GM12878 (cell line): ENCODE measurements at regions of chr3 and their contacts with region 1.

Region 1: GRCh38 chr3:141441381-141442364 is 45.2 kb upstream of the RASA2 start:
- DNase-seq: peak; percentile 84
- ATAC-seq: peak; percentile 99
- H3K4me3 ChIP-seq: no peak overlapping the region
- H3K27ac ChIP-seq: peak overlapping the region; percentile 73
- H3K4me1 ChIP-seq: peaks cover 31% of the 10 kb centered on the region
- H3K27me3 ChIP-seq: no peaks in the 10 kb centered on the region
- CTCF ChIP-seq: peak; percentile 94 to 96 (median 95)
- EP300 ChIP-seq: no peak
- POLR2A ChIP-seq: no peak
- RAD21 ChIP-seq: peak; percentile 86

Region 2: DNA sequence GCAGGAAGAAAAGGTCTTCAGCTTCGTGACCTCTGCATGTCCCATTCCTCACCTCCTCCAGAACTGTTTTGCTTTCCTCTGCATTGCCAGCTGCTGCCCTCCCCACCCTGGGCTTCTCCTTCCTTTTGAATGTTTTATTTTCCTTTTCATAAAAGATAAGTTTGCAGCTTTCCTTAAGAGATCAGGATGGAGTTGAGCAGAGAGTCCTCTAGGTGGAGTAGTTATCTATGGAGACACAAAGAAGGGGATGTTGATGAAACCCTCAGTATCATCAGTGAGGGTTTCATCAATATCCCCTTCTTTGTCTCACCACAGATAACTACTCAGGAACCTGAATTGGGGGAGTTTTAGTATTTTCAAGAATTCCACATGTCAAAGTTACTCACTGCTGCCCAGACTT is 519.0 kb before region 1 on chr3:
- CTCF ChIA-PET with region 1: no interaction called
- POLR2A ChIA-PET with region 1: no interaction called
- RAD21 ChIA-PET with region 1: no interaction called
- SMC1A ChIA-PET with region 1: no interaction called
- in situ Hi-C with region 1: no loop called
- intact Hi-C with region 1: no loop called
- DNase-seq: no peak
- ATAC-seq: peak; percentile 77
- H3K4me3 ChIP-seq: no peak overlapping the region
- H3K27ac ChIP-seq: no peak overlapping the region
- H3K4me1 ChIP-seq: no peaks in the 10 kb centered on the region
- H3K27me3 ChIP-seq: no peaks in the 10 kb centered on the region
- CTCF ChIP-seq: peak; percentile 39 to 45 (median 42); a peak in 5 of 6 replicates
- EP300 ChIP-seq: no peak
- POLR2A ChIP-seq: no peak
- RAD21 ChIP-seq: peak; percentile 57

Region 3: GRCh38 chr3:141303481-141304223 is 138.0 kb before region 1 on chr3:
- CTCF ChIA-PET with region 1: interaction called, 31 read pairs
- POLR2A ChIA-PET with region 1: no interaction called
- RAD21 ChIA-PET with region 1: interaction called, 12 read pairs
- SMC1A ChIA-PET with region 1: interaction called, 209 read pairs
- in situ Hi-C with region 1: no loop called
- intact Hi-C with region 1: no loop called
- DNase-seq: peak; percentile 64
- ATAC-seq: peak; percentile 93
- H3K4me3 ChIP-seq: no peak overlapping the region
- H3K27ac ChIP-seq: no peak overlapping the region
- H3K4me1 ChIP-seq: peaks cover 8% of the 10 kb centered on the region
- H3K27me3 ChIP-seq: no peaks in the 10 kb centered on the region
- CTCF ChIP-seq: peak; percentile 55 to 78 (median 70); a peak in 5 of 6 replicates
- EP300 ChIP-seq: no peak
- POLR2A ChIP-seq: no peak
- RAD21 ChIP-seq: peak; percentile 89

Region 4: DNA sequence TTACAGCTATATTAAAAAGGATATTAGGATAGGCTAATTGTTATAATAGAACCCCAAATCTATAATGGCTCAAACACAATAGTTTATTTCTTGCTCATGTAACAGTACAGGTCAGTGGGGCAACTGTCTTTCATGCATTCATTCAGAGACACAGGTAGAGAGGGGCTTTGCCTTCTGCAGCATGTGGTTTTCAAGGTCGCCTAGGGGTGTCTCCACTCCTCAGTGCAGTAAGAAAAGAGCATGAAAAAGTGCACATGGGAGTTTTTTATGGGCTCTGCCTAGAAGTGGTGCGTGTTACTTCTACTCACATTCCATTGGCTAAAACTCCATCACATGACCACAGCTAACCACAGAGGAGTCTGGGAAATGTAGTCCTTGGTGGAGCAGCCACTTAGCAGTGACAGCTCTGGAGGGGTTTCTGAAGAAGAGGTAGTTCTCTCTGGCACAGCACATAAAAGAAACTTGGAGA is 71.6 kb before region 1 on chr3:
- CTCF ChIA-PET with region 1: interaction called, 44 read pairs
- POLR2A ChIA-PET with region 1: interaction called, 13 read pairs
- RAD21 ChIA-PET with region 1: interaction called, 60 read pairs
- SMC1A ChIA-PET with region 1: interaction called, 81 read pairs
- in situ Hi-C with region 1: loop called (anchors 5 kb)
- intact Hi-C with region 1: no loop called
- DNase-seq: peak; percentile 96
- ATAC-seq: peak; percentile 87
- H3K4me3 ChIP-seq: no peak overlapping the region
- H3K27ac ChIP-seq: peak overlapping the region; percentile 35
- H3K4me1 ChIP-seq: peaks cover 53% of the 10 kb centered on the region
- H3K27me3 ChIP-seq: no peaks in the 10 kb centered on the region
- CTCF ChIP-seq: peak; percentile 52 to 75 (median 69)
- EP300 ChIP-seq: no peak
- POLR2A ChIP-seq: peak; percentile 53
- RAD21 ChIP-seq: peak; percentile 80

Region 5: DNA sequence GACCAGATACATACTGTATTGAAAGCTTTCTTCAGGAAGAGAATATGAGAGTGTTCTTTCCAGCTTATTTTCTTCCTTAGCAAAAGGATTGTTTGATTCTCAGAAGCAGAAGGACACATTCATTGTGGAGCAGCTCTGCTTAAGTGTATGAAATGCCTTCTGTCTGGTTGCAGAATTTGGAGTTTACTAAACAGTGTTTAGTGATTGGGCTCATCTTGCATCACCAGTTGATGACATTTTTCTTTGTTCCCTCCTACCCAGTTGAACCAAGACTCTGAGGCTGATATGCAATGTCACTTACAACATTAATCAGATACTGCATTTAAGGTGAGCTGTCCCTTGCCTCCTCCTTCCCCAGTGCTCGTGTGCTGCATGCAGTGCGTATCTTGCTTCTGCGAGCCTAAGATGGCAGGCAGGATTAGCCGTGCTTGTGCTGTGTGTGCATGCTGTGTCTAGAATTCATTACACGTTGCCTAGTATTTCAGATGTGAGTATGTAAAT is 55.0 kb before region 1 on chr3:
- CTCF ChIA-PET with region 1: interaction called, 40 read pairs
- POLR2A ChIA-PET with region 1: interaction called, 4 read pairs
- RAD21 ChIA-PET with region 1: interaction called, 40 read pairs
- SMC1A ChIA-PET with region 1: interaction called, 84 read pairs
- in situ Hi-C with region 1: no loop called
- intact Hi-C with region 1: no loop called
- DNase-seq: no peak
- ATAC-seq: peak; percentile 58
- H3K4me3 ChIP-seq: peak overlapping the region; percentile 67
- H3K27ac ChIP-seq: peak overlapping the region; percentile 94
- H3K4me1 ChIP-seq: peaks cover 30% of the 10 kb centered on the region
- H3K27me3 ChIP-seq: no peaks in the 10 kb centered on the region
- CTCF ChIP-seq: no peak
- EP300 ChIP-seq: no peak
- POLR2A ChIP-seq: peak; percentile 93
- RAD21 ChIP-seq: no peak

Region 6: DNA sequence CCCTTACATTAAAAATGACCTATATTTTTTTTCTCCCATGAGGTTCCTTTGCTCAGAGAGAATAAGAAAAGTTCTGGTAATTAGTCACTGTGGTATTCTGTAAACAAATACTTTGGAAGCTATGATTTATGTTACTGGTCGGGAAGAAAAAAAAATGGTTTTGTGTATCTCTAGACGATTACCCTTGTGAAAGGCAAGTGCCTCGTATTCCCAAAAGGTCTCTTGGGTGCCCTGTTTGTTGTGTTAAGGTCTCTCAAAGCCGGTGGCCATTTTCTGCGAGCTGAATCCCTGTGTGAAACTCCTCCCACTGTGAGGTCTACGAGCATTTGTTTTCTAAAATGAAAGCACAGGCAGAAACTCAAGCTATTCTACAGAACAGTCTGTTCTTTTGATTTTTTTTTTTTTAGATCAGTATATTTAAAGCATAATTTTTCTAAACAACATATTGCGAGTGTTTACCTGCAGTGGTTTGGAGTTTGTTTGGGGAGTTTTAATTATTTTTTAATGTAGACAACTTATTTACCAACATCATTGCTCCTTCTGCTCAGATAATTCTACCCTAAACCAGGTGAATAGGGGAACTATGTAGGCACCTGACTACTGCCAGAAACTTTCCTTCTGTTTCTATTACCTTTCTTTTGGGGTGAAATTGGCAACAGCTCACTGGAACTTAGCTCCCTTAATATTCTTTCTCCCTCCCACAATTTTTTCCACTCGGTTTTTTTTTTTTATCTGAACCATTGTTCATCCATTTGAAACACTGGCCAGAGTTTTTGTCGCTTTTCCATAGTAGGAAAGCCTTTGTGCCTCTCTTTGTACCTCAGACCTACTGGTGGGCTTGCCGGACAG is 29.4 kb before region 1 on chr3:
- CTCF ChIA-PET with region 1: interaction called, 25 read pairs
- POLR2A ChIA-PET with region 1: interaction called, 6 read pairs
- RAD21 ChIA-PET with region 1: interaction called, 55 read pairs
- SMC1A ChIA-PET with region 1: interaction called, 57 read pairs
- in situ Hi-C with region 1: no loop called
- intact Hi-C with region 1: loop called (anchors 1 kb)
- DNase-seq: no peak
- ATAC-seq: peak; percentile 63
- H3K4me3 ChIP-seq: peak overlapping the region; percentile 57
- H3K27ac ChIP-seq: peak overlapping the region; percentile 92
- H3K4me1 ChIP-seq: peaks cover 63% of the 10 kb centered on the region
- H3K27me3 ChIP-seq: no peaks in the 10 kb centered on the region
- CTCF ChIP-seq: no peak
- EP300 ChIP-seq: no peak
- POLR2A ChIP-seq: 0 out of 2 replicates have a peak, but pooled peaks have one; percentile 34
- RAD21 ChIP-seq: no peak

Region 7: DNA sequence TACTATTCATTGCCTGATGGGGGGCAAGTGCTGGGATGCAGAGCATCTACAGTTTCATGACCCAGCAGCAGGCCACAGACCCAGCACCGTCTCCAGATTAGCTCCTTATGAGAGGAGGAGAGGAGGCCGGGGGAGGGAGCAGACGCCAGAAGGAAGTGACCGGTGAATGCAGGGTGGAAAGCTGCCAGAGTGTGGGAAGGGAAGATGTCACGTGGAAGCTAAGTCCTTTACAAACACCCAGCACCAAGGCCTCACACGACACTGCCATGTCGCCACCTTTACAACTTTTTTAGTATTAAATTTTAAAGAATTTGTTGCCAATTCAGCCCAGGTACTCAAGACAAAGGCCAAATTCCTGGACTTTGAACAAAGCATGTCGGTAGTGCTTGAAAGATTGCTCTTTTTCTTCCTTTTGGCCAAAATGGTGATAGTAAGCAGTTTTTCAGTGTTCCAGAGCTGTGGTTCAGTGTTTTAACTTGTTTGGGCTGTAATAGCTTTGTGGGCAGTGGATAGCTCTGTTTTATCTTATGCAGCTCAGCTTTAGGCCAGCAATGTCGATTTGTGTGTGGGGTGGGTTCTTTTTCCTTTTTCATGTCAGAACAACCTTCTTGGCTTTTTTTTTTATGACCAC is 15.2 kb before region 1 on chr3:
- CTCF ChIA-PET with region 1: interaction called, 34 read pairs
- POLR2A ChIA-PET with region 1: interaction called, 3 read pairs
- RAD21 ChIA-PET with region 1: interaction called, 19 read pairs
- SMC1A ChIA-PET with region 1: interaction called, 38 read pairs
- in situ Hi-C with region 1: no loop called
- intact Hi-C with region 1: no loop called
- DNase-seq: no peak
- ATAC-seq: no peak
- H3K4me3 ChIP-seq: no peak overlapping the region
- H3K27ac ChIP-seq: no peak overlapping the region
- H3K4me1 ChIP-seq: peaks cover 7% of the 10 kb centered on the region
- H3K27me3 ChIP-seq: no peaks in the 10 kb centered on the region
- CTCF ChIP-seq: no peak
- EP300 ChIP-seq: no peak
- POLR2A ChIP-seq: no peak
- RAD21 ChIP-seq: no peak

Region 8: GRCh38 chr3:141597931-141598330 is 156.3 kb after region 1 on chr3:
- CTCF ChIA-PET with region 1: no interaction called
- POLR2A ChIA-PET with region 1: no interaction called
- RAD21 ChIA-PET with region 1: no interaction called
- SMC1A ChIA-PET with region 1: no interaction called
- in situ Hi-C with region 1: no loop called
- intact Hi-C with region 1: no loop called
- DNase-seq: no peak
- ATAC-seq: no peak
- H3K4me3 ChIP-seq: no peak overlapping the region
- H3K27ac ChIP-seq: no peak overlapping the region
- H3K4me1 ChIP-seq: no peaks in the 10 kb centered on the region
- H3K27me3 ChIP-seq: no peaks in the 10 kb centered on the region
- CTCF ChIP-seq: no peak
- EP300 ChIP-seq: no peak
- POLR2A ChIP-seq: no peak
- RAD21 ChIP-seq: no peak